ENCODE measurements at regions of chr17 and their contacts with region 1.

Region 1: GRCh38 chr17:50749245-50749644 is 18.1 kb downstream of the ANKRD40CL start:
- DNase-seq: no peak
- H3K4me3 ChIP-seq: no peak overlapping the region
- H3K27ac ChIP-seq: no peak overlapping the region; a peak in 1 of 4 replicates
- H3K4me1 ChIP-seq: no peaks in the 10 kb centered on the region; a peak in 2 of 4 replicates
- H3K27me3 ChIP-seq: no peaks in the 10 kb centered on the region
- CTCF ChIP-seq: no peak
- EP300 ChIP-seq: no peak
- RAD21 ChIP-seq: no peak

Region 2: DNA sequence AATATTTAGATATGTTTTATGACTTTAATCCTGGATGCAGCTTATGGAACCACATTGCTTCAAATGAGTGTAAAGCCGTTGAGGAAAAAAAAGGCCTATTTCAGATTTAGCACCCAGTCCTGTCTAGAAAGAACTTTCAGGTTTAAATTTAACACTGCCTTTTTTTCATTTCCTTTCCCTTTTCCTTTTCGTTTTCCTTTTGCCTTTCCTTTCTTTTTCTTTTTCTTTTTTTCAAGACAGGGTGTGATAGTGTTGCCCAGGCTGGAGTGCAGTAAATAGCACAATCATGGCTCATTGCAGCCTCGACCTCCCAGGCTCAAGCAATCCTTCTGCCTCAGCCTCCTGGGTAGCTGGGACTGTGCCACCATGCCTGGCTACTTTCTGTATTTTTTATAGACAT is 14.0 kb before region 1 on chr17:
- CTCF ChIA-PET with region 1: interaction called, 10 read pairs
- POLR2A ChIA-PET with region 1: no interaction called
- DNase-seq: no peak
- H3K4me3 ChIP-seq: no peak overlapping the region
- H3K27ac ChIP-seq: no peak overlapping the region
- H3K4me1 ChIP-seq: peaks cover 0 to 9% of the 10 kb centered on the region in 2 experiments; a peak in 2 of 4 replicates
- H3K27me3 ChIP-seq: no peaks in the 10 kb centered on the region
- CTCF ChIP-seq: no peak
- EP300 ChIP-seq: no peak
- RAD21 ChIP-seq: no peak

Measured in SK-N-SH (cell line).